Activated T-helper 1 cell treated with anti-CD3 and anti-CD28 coated beads, Interleukin-12 subunit alpha, Interleukin-12 subunit beta, Interleukin-2, Interleukin-4 antibody, amounts not matched to agents 30 ng/mL and 10 ng/mL and 1 ng/mL, durations not matched to agents 14 hours and 24 hours and 36 hours (primary cell): ENCODE measurements at regions of chr5 and their contacts with region 1.

Region 1: GRCh38 chr5:132674671-132675506 is 1.1 kb downstream of the IL4 start:
- DNase-seq: no peak
- H3K4me3 Mint-ChIP-seq: peak overlapping the region; percentile 63
- H3K27ac Mint-ChIP-seq: peak overlapping the region; percentile 88
- H3K4me1 Mint-ChIP-seq: peaks cover 41% of the 10 kb centered on the region
- H3K27me3 Mint-ChIP-seq: no peaks in the 10 kb centered on the region

Region 2: GRCh38 chr5:132688536-132689339 is 13.8 kb after region 1 on chr5:
- intact Hi-C with region 1: loop called (anchors 1 kb)
- DNase-seq: no peak
- H3K4me3 Mint-ChIP-seq: no peak overlapping the region
- H3K27ac Mint-ChIP-seq: peak overlapping the region; percentile 70
- H3K4me1 Mint-ChIP-seq: peaks cover 42% of the 10 kb centered on the region
- H3K27me3 Mint-ChIP-seq: no peaks in the 10 kb centered on the region